Dendritic cell treated with granulocyte-macrophage colony-stimulating factor and Interleukin-4, amounts not matched to agents 40 ng/mL and 50 ng/mL, for 4 days (primary cell): ENCODE measurements at regions of chr1 and their contacts with region 1.

Region 1: DNA sequence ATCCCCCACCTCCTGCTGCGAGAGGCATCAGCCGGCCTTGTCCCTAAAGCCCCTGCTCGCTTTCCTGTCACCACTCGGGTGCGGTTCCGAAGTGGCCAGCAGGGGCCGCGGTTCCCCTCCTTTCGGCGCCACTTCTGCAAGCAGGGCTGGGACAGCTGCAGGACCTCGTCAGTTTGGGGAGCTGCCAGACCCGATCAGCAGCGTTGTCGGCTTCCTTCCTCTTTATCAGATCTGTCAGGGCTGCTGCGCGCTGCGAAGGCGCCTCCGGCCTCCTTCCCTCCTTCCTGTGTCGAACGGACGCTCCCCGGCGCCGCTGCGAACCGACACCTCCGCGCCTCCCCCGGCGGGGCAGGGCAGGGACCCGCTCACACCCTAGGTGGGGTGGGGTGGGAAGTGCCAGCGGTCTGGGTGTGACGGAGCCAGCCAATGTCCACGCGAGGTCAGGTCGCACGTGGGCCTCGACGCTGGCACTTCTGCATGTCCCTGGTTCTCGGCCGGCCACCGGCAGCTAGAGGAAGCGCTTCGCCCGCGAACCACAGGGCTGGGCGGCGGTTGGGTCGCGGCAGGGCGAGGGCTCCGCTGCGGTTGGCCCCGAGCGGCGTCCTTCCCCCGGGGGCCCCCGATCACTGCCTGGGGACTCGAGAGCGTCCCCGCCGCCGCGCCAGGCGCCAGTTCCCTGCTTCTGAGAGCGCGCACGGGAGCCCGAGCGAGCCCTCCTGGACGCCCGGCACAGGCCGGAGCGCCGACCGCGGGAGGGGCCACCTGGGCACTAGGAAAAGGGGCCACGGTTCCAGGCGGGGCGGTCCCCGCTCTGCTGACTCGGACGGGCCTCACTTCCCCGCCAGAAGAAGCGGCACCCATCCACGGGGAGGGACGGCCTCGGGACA is 81.8 kb downstream of the RUNX3 start:
- H3K4me3 Mint-ChIP-seq: peak overlapping the region; percentile 70
- H3K27ac Mint-ChIP-seq: peak overlapping the region; percentile 93
- H3K4me1 Mint-ChIP-seq: peaks cover 35% of the 10 kb centered on the region
- H3K27me3 Mint-ChIP-seq: peaks cover 4% of the 10 kb centered on the region

Region 2: DNA sequence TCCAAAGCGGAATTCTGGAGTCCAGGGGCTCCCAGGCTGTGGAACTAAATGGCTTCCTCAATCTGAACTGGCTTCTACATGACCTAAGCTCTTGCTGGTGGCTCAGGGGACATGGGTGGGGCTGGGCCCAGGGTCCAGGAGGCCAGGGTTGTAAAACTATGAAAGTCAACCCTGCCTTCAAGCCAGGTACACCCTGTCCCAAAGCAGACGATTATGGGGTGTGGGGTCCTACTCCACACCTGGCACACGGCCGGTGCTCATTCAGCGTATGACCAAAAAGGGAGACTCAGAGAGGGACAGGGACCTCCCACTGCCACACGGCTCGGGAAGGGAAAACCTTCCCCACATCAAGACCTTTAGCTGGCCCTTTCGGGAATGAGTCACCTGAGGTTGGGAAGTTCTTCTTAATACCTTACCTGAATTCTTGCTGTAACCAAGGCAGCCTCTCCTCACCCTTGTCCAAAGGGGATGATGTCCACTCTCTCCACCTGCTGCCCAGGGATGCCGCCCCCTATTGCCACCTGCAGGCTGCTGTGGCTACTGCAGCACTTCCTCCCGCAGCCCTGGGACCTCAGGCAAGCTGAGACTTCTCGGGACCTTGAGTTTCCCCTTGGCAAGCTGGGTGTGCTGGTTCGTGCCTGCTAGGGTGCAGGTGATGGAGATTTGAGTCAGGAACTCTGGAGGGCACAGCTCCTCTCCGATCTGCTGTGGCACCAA is 49.7 kb after region 1 on chr1:
- intact Hi-C with region 1: loop called (anchors 1 kb)
- H3K4me3 Mint-ChIP-seq: no peak overlapping the region
- H3K27ac Mint-ChIP-seq: no peak overlapping the region
- H3K4me1 Mint-ChIP-seq: peaks cover 14% of the 10 kb centered on the region
- H3K27me3 Mint-ChIP-seq: peaks cover 14% of the 10 kb centered on the region

Region 3: GRCh38 chr1:24909388-24909898 is 61.2 kb after region 1 on chr1:
- intact Hi-C with region 1: loop called (anchors 1 kb)
- H3K4me3 Mint-ChIP-seq: no peak overlapping the region
- H3K27ac Mint-ChIP-seq: peak overlapping the region; percentile 71
- H3K4me1 Mint-ChIP-seq: peaks cover 20% of the 10 kb centered on the region
- H3K27me3 Mint-ChIP-seq: no peaks in the 10 kb centered on the region

Region 4: GRCh38 chr1:24926563-24927249 is 78.5 kb after region 1 on chr1:
- intact Hi-C with region 1: loop called (anchors 2 kb)
- H3K4me3 Mint-ChIP-seq: peak overlapping the region; percentile 6
- H3K27ac Mint-ChIP-seq: peak overlapping the region; percentile 93
- H3K4me1 Mint-ChIP-seq: peaks cover 69% of the 10 kb centered on the region
- H3K27me3 Mint-ChIP-seq: peaks cover 14% of the 10 kb centered on the region

Region 5: GRCh38 chr1:25037174-25038074 is 189.2 kb after region 1 on chr1:
- intact Hi-C with region 1: loop called (anchors 2 kb)
- H3K4me3 Mint-ChIP-seq: no peak overlapping the region
- H3K27ac Mint-ChIP-seq: no peak overlapping the region
- H3K4me1 Mint-ChIP-seq: no peaks in the 10 kb centered on the region
- H3K27me3 Mint-ChIP-seq: peaks cover 30% of the 10 kb centered on the region

Region 6: GRCh38 chr1:25099343-25099951 is 251.2 kb after region 1 on chr1:
- intact Hi-C with region 1: loop called (anchors 2 kb)
- H3K4me3 Mint-ChIP-seq: no peak overlapping the region
- H3K27ac Mint-ChIP-seq: peak overlapping the region; percentile 31
- H3K4me1 Mint-ChIP-seq: peaks cover 40% of the 10 kb centered on the region
- H3K27me3 Mint-ChIP-seq: peaks cover 13% of the 10 kb centered on the region

Region 7: GRCh38 chr1:25204797-25205480 is 356.7 kb after region 1 on chr1:
- intact Hi-C with region 1: loop called (anchors 5 kb)
- H3K4me3 Mint-ChIP-seq: no peak overlapping the region
- H3K27ac Mint-ChIP-seq: no peak overlapping the region
- H3K4me1 Mint-ChIP-seq: peaks cover 6% of the 10 kb centered on the region
- H3K27me3 Mint-ChIP-seq: peaks cover 2% of the 10 kb centered on the region